H1 (cell line): ENCODE measurements at regions of chr11 and their contacts with region 1.

Region 1: DNA sequence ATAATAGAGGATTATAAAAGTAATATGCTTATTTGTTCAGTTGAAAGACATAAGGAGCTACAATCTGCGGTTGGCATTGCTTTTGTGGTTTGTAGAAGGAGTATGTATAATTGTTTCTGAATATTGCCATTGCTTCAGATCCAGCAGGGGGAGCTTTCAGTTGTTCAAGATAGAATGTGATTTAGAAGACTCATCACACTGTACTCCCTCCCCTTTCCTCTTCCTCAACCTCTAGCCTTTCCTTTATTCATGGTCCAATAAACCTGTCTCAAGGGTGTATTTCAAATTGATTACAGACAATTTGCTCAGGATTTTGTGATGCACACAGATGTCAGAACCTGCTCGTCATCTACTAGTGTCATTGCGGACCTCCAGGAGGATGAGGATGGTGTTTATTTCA is 9.8 kb downstream of the PRMT3 start:
- DNase-seq: no peak
- H3K4me3 ChIP-seq: no peak overlapping the region
- H3K27ac ChIP-seq: no peak overlapping the region
- H3K4me1 ChIP-seq: no peaks in the 10 kb centered on the region
- H3K27me3 ChIP-seq: no peaks in the 10 kb centered on the region
- CTCF ChIP-seq: peak in 2 of 3 experiments; percentile 46 to 56; a peak in 3 of 4 replicates
- EP300 ChIP-seq: no peak
- POLR2A ChIP-seq: no peak
- RAD21 ChIP-seq: peak; percentile 38 to 52

Region 2: DNA sequence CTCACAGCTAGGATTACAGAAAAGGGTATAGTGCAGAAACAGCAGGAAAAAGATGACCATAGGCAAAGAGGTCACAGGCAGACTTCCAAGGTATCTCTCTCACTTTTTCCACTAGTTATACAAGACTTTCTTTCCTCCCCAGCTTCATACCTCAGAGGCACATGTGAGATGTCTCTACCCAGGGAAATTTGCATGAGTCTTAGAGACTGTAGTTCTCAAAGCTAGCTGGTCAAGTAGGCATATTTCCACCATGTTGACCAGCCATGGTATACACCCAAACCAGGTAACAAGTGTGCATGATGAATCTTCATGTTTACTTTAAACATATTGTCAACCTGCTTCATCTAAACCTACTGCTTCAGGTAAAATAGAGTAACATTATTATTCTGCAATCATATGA is 18.2 kb after region 1 on chr11:
- CTCF ChIA-PET with region 1: interaction called, 22 read pairs
- POLR2A ChIA-PET with region 1: interaction called, 3 read pairs
- DNase-seq: no peak
- H3K4me3 ChIP-seq: no peak overlapping the region
- H3K27ac ChIP-seq: no peak overlapping the region
- H3K4me1 ChIP-seq: no peaks in the 10 kb centered on the region
- H3K27me3 ChIP-seq: no peaks in the 10 kb centered on the region
- CTCF ChIP-seq: no peak
- EP300 ChIP-seq: no peak
- POLR2A ChIP-seq: no peak
- RAD21 ChIP-seq: no peak

Region 3: GRCh38 chr11:20599221-20600019 is 202.1 kb after region 1 on chr11 and contains the start of gene SLC6A5:
- CTCF ChIA-PET with region 1: interaction called, 29 read pairs
- POLR2A ChIA-PET with region 1: no interaction called
- DNase-seq: peak; percentile 49 to 88
- H3K4me3 ChIP-seq: peak within 1 kb of the TSS in 2 of 4 experiments; percentile 4 to 58; a peak in 2 of 8 replicates
- H3K27ac ChIP-seq: no peak within 1 kb of the TSS
- H3K4me1 ChIP-seq: peaks cover 0 to 13% (median 2%) of the 10 kb centered on the region in 4 experiments; a peak in 5 of 7 replicates
- H3K27me3 ChIP-seq: peaks cover 58 to 96% (median 89%) of the 10 kb centered on the region in 4 experiments
- CTCF ChIP-seq: no peak
- EP300 ChIP-seq: peak in 1 of 2 experiments; percentile 14; a peak in 1 of 3 replicates
- POLR2A ChIP-seq: no peak
- RAD21 ChIP-seq: peak in 1 of 2 experiments; percentile 35; a peak in 2 of 4 replicates
- total RNA-seq, gene SLC6A5: not detected in 2 replicates